ENCODE measurements at regions of chr1 and their contacts with region 1.

Region 1: DNA sequence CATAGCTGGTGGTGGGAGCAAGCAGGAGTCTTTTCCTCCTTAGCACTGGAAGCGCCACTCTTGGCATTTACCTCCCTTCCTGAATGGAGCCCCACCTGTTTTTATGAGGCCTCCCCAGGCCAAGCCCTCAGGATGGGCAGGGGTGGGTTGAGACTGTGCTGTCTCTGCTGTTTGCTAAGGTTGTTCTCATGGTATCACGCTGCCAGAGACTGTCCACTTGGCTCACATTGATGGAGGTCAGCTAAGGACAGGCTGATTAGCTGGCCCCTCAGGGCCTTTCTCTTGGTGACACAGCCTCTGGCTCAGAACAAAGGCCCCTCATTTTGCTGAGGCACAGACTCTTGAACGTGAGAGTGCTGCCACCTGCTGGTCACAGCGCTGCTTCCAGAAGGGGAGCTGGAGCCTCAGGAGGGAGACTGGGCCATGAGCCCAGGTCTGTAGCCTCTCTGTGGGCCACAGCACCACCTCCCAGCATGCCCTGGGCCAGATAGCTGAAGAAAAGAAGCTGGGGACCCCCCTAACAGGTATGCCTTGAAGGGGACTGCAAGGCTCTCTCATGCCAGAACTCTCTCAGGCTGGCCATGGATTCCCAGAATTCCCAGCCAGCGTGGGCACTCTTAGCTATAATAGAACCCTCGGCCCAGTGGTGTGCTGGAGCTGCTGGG is 85.6 kb downstream of the CD58 start:
- DNase-seq: peak; percentile 74 to 81 (median 76)
- H3K4me3 ChIP-seq: no peak overlapping the region
- H3K4me3 Mint-ChIP-seq: no peak overlapping the region
- H3K27ac ChIP-seq: no peak overlapping the region
- H3K27ac Mint-ChIP-seq: no peak overlapping the region
- H3K4me1 ChIP-seq: no peaks in the 10 kb centered on the region
- H3K4me1 Mint-ChIP-seq: peaks cover 0 to 2% (median 0%) of the 10 kb centered on the region in 4 donors
- H3K27me3 ChIP-seq: no peaks in the 10 kb centered on the region
- H3K27me3 Mint-ChIP-seq: no peaks in the 10 kb centered on the region

Region 2: DNA sequence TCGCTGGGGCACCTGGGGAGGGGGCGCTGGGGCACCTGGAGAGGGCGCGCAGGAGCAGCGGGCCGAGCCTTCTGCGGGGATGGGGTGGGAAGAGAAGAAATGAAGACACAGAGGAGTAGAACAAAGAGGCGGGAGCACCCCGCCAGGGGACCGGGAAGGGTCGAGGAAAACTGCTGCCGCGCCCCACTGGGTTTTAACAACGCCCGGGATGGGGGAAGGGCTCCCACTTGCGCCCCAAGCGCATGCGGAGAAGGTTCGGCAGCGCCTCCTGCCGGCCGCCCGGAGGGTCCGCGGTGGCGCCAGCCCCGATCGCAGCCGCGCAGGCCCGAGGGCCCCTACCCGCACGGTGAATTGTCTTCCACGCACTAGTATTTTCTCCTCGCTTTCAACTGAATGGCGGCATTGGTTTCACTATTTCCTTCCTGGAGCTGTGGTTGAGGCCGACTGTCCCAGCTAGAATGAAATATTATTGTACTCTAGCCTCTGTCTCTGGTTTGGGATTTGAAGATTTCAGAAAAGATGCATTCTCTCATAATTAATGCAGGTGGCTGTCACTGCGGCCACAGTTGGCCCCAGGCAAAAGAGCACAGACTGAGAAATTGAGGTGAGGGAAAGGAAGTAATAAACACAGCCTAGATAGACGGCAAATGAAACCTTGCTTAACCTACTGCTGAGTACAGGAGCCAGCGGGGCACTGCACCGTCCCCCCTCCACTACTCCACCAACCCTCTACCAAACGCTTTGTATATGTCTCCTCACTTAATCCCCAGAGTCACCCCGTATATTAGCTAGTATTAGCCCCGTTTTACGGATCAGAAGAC is 316.7 kb before region 1 on chr1:
- CTCF ChIA-PET with region 1: interaction called, 18 read pairs
- POLR2A ChIA-PET with region 1: interaction called, 3 read pairs
- intact Hi-C with region 1: no loop called
- DNase-seq: peak; percentile 77 to 84 (median 83)
- H3K4me3 ChIP-seq: peak overlapping the region; percentile 13 to 71
- H3K4me3 Mint-ChIP-seq: peak overlapping the region; percentile 63 to 94 (median 88)
- H3K27ac ChIP-seq: peak overlapping the region; percentile 55
- H3K27ac Mint-ChIP-seq: peak overlapping the region; percentile 33 to 96 (median 90)
- H3K4me1 ChIP-seq: peaks cover 12% of the 10 kb centered on the region
- H3K4me1 Mint-ChIP-seq: peaks cover 12 to 22% (median 17%) of the 10 kb centered on the region in 4 donors
- H3K27me3 ChIP-seq: no peaks in the 10 kb centered on the region
- H3K27me3 Mint-ChIP-seq: peaks cover 0 to 1% of the 10 kb centered on the region in 2 donors

Region 3: GRCh38 chr1:116360429-116361173 is 124.6 kb before region 1 on chr1:
- CTCF ChIA-PET with region 1: interaction called, 41 read pairs
- POLR2A ChIA-PET with region 1: interaction called, 3 read pairs
- intact Hi-C with region 1: loop called (anchors 1 kb)
- DNase-seq: peak in 4 of 5 donors; percentile 40 to 47 (median 43)
- H3K4me3 ChIP-seq: no peak overlapping the region
- H3K4me3 Mint-ChIP-seq: no peak overlapping the region
- H3K27ac ChIP-seq: no peak overlapping the region
- H3K27ac Mint-ChIP-seq: peak overlapping the region in 1 of 7 donors; percentile 22
- H3K4me1 ChIP-seq: peaks cover 6% of the 10 kb centered on the region
- H3K4me1 Mint-ChIP-seq: peaks cover 13 to 30% (median 20%) of the 10 kb centered on the region in 4 donors
- H3K27me3 ChIP-seq: no peaks in the 10 kb centered on the region
- H3K27me3 Mint-ChIP-seq: no peaks in the 10 kb centered on the region

Region 4: GRCh38 chr1:116397728-116398127 is 87.5 kb before region 1 on chr1:
- CTCF ChIA-PET with region 1: interaction called, 18 read pairs
- POLR2A ChIA-PET with region 1: no interaction called
- intact Hi-C with region 1: no loop called
- DNase-seq: no peak
- H3K4me3 ChIP-seq: no peak overlapping the region
- H3K4me3 Mint-ChIP-seq: no peak overlapping the region
- H3K27ac ChIP-seq: no peak overlapping the region
- H3K27ac Mint-ChIP-seq: peak overlapping the region in 3 of 7 donors; percentile 43 to 64 (median 63)
- H3K4me1 ChIP-seq: peaks cover 11% of the 10 kb centered on the region
- H3K4me1 Mint-ChIP-seq: peaks cover 12 to 31% (median 21%) of the 10 kb centered on the region in 4 donors
- H3K27me3 ChIP-seq: no peaks in the 10 kb centered on the region
- H3K27me3 Mint-ChIP-seq: no peaks in the 10 kb centered on the region

Region 5: GRCh38 chr1:116451702-116452386 is 33.4 kb before region 1 on chr1:
- CTCF ChIA-PET with region 1: interaction called, 11 read pairs
- POLR2A ChIA-PET with region 1: no interaction called
- intact Hi-C with region 1: no loop called
- DNase-seq: no peak
- H3K4me3 ChIP-seq: no peak overlapping the region
- H3K4me3 Mint-ChIP-seq: no peak overlapping the region
- H3K27ac ChIP-seq: no peak overlapping the region
- H3K27ac Mint-ChIP-seq: no peak overlapping the region
- H3K4me1 ChIP-seq: no peaks in the 10 kb centered on the region
- H3K4me1 Mint-ChIP-seq: no peaks in the 10 kb centered on the region
- H3K27me3 ChIP-seq: no peaks in the 10 kb centered on the region
- H3K27me3 Mint-ChIP-seq: peaks cover 0 to 3% of the 10 kb centered on the region in 2 donors

Region 6: GRCh38 chr1:116514708-116515525 is 29.7 kb after region 1 on chr1:
- CTCF ChIA-PET with region 1: interaction called, 10 read pairs
- POLR2A ChIA-PET with region 1: interaction called, 4 read pairs
- intact Hi-C with region 1: no loop called
- DNase-seq: peak; percentile 70 to 90 (median 75)
- H3K4me3 ChIP-seq: peak overlapping the region; percentile 6 to 21
- H3K4me3 Mint-ChIP-seq: peak overlapping the region; percentile 65 to 88 (median 78)
- H3K27ac ChIP-seq: peak overlapping the region; percentile 74
- H3K27ac Mint-ChIP-seq: peak overlapping the region; percentile 94 to 99 (median 96)
- H3K4me1 ChIP-seq: peaks cover 67% of the 10 kb centered on the region
- H3K4me1 Mint-ChIP-seq: peaks cover 53 to 78% (median 62%) of the 10 kb centered on the region in 4 donors
- H3K27me3 ChIP-seq: no peaks in the 10 kb centered on the region
- H3K27me3 Mint-ChIP-seq: no peaks in the 10 kb centered on the region